Left lung (tissue), 14 donors: ENCODE measurements at regions of chr14 and their contacts with region 1.

Region 1: DNA sequence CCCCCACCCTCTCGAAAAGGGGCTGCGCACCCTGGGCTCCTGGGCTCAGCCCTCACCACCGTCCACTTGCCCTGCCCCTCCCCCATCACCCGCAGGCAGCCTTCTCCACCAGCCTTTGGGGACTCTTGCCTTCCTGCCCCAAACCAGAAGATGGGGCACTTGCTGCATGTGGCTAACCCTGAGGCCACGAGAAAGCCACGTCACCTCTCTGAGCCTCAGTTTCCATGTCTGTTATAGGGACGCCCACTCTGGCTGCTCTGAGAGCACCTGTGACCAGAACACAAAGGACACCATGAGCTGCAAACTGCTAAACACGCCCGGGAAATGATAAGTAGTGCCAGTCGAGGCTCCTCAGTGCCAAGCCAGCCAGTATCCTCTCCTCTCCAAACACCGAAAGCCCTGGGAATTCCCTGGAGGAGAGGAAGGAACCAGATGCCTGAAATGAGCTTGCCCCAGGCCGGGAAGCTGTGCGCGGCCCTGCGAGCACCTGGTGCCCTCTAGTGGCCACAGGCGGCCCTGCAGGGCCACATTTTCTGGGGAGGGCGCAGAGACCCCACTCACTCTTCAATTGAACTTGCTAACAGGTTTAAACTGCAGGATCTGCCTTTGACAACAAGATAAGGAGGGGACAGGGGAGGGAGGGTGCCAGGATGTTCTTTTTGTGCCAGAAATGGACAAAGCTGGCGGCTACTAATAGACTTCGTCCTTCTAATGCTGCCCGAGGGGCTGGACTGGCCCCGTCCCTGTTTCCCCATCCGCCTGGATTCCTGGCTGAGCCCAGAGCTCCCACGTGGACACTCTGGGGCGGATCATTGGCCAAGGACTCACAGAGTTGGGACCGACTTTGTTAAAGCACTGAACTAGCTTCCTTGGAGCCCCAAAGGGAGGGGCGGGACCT is 10.2 kb upstream of the SERPINA9 start:
- DNase-seq: peak in 3 of 4 donors; percentile 33 to 92 (median 61)
- ATAC-seq: peak; percentile 97
- H3K4me3 ChIP-seq: no peak overlapping the region
- H3K27ac ChIP-seq: no peak overlapping the region
- H3K4me1 ChIP-seq: peaks cover 0 to 2% of the 10 kb centered on the region in 2 donors
- H3K27me3 ChIP-seq: peaks cover 0 to 26% of the 10 kb centered on the region in 2 donors
- CTCF ChIP-seq: peak; percentile 93 to 99

Region 2: GRCh38 chr14:94355191-94355797 is 130.9 kb before region 1 on chr14:
- intact Hi-C with region 1: loop called in 1 of 2 experiments (anchors 10 kb)
- DNase-seq: peak in 3 of 4 donors; percentile 30 to 90 (median 70)
- ATAC-seq: peak; percentile 94
- H3K4me3 ChIP-seq: no peak overlapping the region
- H3K27ac ChIP-seq: no peak overlapping the region
- H3K4me1 ChIP-seq: no peaks in the 10 kb centered on the region
- H3K27me3 ChIP-seq: peaks cover 0 to 24% of the 10 kb centered on the region in 2 donors
- CTCF ChIP-seq: peak in 1 of 2 donors; percentile 38